Pancreas (tissue), 10 donors: ENCODE measurements at regions of chr12 and their contacts with region 1.

Region 1: DNA sequence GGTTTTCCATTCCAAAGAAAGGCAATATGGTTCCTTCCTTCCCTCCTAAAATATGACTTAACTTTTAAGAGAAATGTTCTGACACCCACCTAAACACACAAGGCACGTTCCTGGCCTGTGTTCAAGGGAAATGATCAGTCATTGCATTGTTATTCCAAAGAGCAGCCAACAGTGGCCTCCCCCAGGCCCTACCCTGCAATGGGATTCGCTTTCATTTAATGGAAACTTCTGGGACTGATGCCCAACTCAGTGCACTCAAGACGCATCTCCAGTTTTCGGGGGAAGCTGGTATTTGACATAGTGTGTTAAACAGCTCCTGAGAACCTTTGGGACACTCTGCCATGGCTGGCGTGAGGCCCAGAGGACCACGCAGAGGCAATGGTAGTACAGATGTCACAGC is 65.9 kb downstream of the DDX51 start:
- DNase-seq: no peak
- ATAC-seq: peak in 1 of 4 donors; percentile 9
- H3K4me3 ChIP-seq: no peak overlapping the region
- H3K27ac ChIP-seq: no peak overlapping the region
- H3K4me1 ChIP-seq: no peaks in the 10 kb centered on the region
- H3K27me3 ChIP-seq: no peaks in the 10 kb centered on the region
- CTCF ChIP-seq: no peak

Region 2: GRCh38 chr12:132748319-132748718 is 670.1 kb after region 1 on chr12:
- intact Hi-C with region 1: loop called in 1 of 3 experiments (anchors 5 kb)
- DNase-seq: peak in 1 of 6 donors; percentile 39
- ATAC-seq: no peak
- H3K4me3 ChIP-seq: no peak overlapping the region
- H3K27ac ChIP-seq: no peak overlapping the region
- H3K4me1 ChIP-seq: no peaks in the 10 kb centered on the region
- H3K27me3 ChIP-seq: no peaks in the 10 kb centered on the region
- CTCF ChIP-seq: no peak